CD8-positive, alpha-beta T cell (primary cell): ENCODE measurements at regions of chrX and their contacts with region 1.

Region 1: DNA sequence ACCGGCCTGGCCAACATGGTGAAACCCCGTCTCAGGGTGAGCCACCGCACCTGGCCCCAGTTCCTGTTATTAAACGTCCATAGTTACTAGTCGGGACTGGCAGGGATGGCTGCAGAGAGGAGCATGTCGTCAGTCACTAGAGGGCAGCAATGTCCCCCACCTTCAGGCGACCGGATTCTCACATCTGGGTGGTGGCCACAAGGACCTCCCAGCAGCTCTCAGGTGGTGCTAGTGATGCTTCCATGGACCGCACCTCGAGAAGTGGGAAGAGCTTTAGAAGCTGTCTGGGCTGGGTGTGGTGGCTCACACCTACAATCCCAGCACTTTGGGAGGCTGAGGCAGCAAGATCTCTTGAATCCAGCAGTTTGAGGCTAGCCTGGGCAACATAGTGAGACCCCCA is 13.3 kb upstream of the IL3RA start:
- DNase-seq: peak; percentile 21 to 72 (median 48)
- ATAC-seq: peak; percentile 68
- H3K4me3 ChIP-seq: no peak overlapping the region
- H3K4me3 Mint-ChIP-seq: no peak overlapping the region
- H3K27ac ChIP-seq: no peak overlapping the region
- H3K27ac Mint-ChIP-seq: no peak overlapping the region
- H3K4me1 ChIP-seq: peaks cover 3% of the 10 kb centered on the region
- H3K4me1 Mint-ChIP-seq: peaks cover 2% of the 10 kb centered on the region
- H3K27me3 ChIP-seq: no peaks in the 10 kb centered on the region
- H3K27me3 Mint-ChIP-seq: peaks cover 12% of the 10 kb centered on the region
- CTCF ChIP-seq: peak; percentile 37

Region 2: DNA sequence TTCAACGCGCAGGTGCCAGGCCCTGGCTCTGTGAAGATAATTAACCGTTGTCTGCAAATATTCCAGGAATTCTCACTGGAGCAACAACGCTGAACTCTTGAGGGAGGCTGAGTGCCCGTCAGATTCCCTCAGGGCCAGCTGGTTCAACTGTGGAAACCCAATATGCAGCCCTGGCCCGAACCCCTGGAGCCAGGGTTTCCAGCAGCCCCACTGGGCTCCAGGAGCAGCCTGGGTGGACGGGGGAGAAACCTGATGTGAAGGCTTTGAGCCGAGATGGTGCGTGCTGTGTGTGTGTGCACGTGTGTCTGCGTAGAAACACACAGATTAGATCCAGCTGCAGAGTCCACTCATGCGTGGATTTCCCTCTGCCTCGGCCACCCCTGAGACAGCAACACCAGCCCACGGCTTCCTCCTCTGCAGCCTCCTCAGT is 88.0 kb after region 1 on chrX:
- CTCF ChIA-PET with region 1: no interaction called
- POLR2A ChIA-PET with region 1: no interaction called
- intact Hi-C with region 1: no loop called
- DNase-seq: no peak
- ATAC-seq: no peak
- H3K4me3 ChIP-seq: no peak overlapping the region
- H3K4me3 Mint-ChIP-seq: no peak overlapping the region
- H3K27ac ChIP-seq: no peak overlapping the region
- H3K27ac Mint-ChIP-seq: no peak overlapping the region
- H3K4me1 ChIP-seq: no peaks in the 10 kb centered on the region
- H3K4me1 Mint-ChIP-seq: no peaks in the 10 kb centered on the region
- H3K27me3 ChIP-seq: no peaks in the 10 kb centered on the region
- H3K27me3 Mint-ChIP-seq: no peaks in the 10 kb centered on the region
- CTCF ChIP-seq: no peak

Region 3: GRCh38 chrX:2595258-2595657 is 1271.9 kb after region 1 on chrX:
- CTCF ChIA-PET with region 1: no interaction called
- POLR2A ChIA-PET with region 1: no interaction called
- intact Hi-C with region 1: loop called in 1 of 2 experiments (anchors 2 kb)
- DNase-seq: no peak
- ATAC-seq: no peak
- H3K4me3 ChIP-seq: no peak overlapping the region
- H3K4me3 Mint-ChIP-seq: no peak overlapping the region
- H3K27ac ChIP-seq: no peak overlapping the region
- H3K27ac Mint-ChIP-seq: no peak overlapping the region
- H3K4me1 ChIP-seq: no peaks in the 10 kb centered on the region
- H3K4me1 Mint-ChIP-seq: peaks cover 12% of the 10 kb centered on the region
- H3K27me3 ChIP-seq: no peaks in the 10 kb centered on the region
- H3K27me3 Mint-ChIP-seq: no peaks in the 10 kb centered on the region
- CTCF ChIP-seq: no peak